Dendritic cell treated with granulocyte-macrophage colony-stimulating factor and Interleukin-4, amounts not matched to agents 40 ng/mL and 50 ng/mL, for 4 days (primary cell): ENCODE measurements at regions of chr15 and their contacts with region 1.

Region 1: GRCh38 chr15:38059665-38060064 is 125.2 kb downstream of the TMCO5A start:
- H3K4me3 Mint-ChIP-seq: peak overlapping the region; percentile 28
- H3K27ac Mint-ChIP-seq: peak overlapping the region; percentile 88
- H3K4me1 Mint-ChIP-seq: peaks cover 76% of the 10 kb centered on the region
- H3K27me3 Mint-ChIP-seq: no peaks in the 10 kb centered on the region

Region 2: GRCh38 chr15:38017721-38018120 is 41.9 kb before region 1 on chr15:
- intact Hi-C with region 1: loop called (anchors 1 kb)
- H3K4me3 Mint-ChIP-seq: no peak overlapping the region
- H3K27ac Mint-ChIP-seq: peak overlapping the region; percentile 94
- H3K4me1 Mint-ChIP-seq: peaks cover 66% of the 10 kb centered on the region
- H3K27me3 Mint-ChIP-seq: no peaks in the 10 kb centered on the region

Region 3: DNA sequence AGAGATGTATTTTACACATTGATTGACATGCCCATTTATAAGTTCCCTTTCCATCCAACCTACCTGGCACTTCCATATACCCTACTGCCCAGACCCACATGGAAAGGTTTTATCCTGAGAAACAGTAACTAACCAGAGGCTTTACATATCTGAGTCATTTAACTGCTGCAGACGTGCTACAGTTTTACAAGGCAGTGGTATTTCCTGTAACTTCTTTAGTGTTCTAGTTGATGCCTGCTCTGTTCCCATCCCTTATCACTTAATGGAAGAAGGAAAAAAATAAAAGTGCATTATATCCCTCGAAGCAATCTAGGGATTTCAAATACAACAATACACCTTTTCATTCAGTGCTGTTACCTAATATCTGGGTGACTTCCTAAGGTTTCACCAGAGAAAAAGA is 18.1 kb before region 1 on chr15:
- intact Hi-C with region 1: no loop called
- H3K4me3 Mint-ChIP-seq: no peak overlapping the region
- H3K27ac Mint-ChIP-seq: peak overlapping the region; percentile 99
- H3K4me1 Mint-ChIP-seq: peaks cover 81% of the 10 kb centered on the region
- H3K27me3 Mint-ChIP-seq: no peaks in the 10 kb centered on the region

Region 4: GRCh38 chr15:38072348-38073177 is 12.9 kb after region 1 on chr15:
- intact Hi-C with region 1: loop called (anchors 1 kb)
- H3K4me3 Mint-ChIP-seq: peak overlapping the region; percentile 69
- H3K27ac Mint-ChIP-seq: peak overlapping the region; percentile 99
- H3K4me1 Mint-ChIP-seq: peaks cover 78% of the 10 kb centered on the region
- H3K27me3 Mint-ChIP-seq: peaks cover 21% of the 10 kb centered on the region